HCT116 (cell line): ENCODE measurements at regions of chr1 and their contacts with region 1.

Region 1: DNA sequence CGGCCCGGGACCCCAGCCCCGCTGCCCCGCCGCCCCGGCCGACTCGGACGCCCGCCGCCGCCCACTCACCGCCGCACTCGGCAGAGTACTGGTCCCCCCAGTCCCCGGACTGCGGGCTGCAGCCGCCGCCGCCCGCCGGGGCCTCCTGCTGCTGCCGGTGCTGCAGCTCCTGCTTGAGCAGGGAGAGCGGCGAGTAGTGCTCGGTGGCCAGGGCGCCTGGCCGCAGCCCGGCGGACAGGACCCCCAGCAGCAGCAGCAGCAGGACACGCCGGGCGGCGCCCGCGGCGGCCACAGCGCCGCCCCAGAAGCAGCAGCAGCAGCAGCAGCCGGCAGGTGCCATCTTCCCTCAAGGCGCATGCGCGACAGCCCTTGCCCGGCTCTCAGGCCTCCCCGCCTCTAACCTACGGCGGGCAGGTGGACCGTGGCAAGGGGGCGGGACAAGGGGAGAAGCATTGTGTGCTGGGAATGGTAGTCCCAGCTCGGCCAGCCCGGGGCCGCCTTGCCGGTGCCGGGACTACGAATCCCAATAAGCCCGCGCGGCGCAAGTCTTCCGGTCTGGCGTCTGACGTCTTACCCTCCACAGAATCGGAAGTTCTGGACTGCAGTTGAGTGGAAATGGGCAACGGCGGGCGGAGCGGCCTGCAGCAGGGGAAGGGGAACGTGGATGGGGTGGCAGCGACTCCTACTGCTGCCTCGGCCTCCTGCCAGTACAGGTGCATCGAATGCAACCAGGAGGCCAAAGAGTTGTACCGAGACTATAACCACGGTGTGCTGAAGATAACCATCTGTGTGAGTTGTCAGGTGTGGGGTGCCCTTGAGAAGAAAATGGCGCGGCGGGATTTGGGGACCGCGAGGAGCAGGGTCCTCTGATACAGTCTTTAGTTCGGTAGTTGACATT is at the starts of genes ARV1 and TTC13:
- DNase-seq: peak; percentile 97
- ATAC-seq: peak; percentile 98
- H3K4me3 ChIP-seq: peak within 1 kb of the TSS; percentile 87 to 88
- H3K27ac ChIP-seq: peak within 1 kb of the TSS; percentile 61
- H3K4me1 ChIP-seq: peaks cover 7 to 13% of the 10 kb centered on the region in 2 experiments; a peak in 2 of 4 replicates
- H3K27me3 ChIP-seq: no peaks in the 10 kb centered on the region
- CTCF ChIP-seq: peak; percentile 55 to 65 (median 63); a peak in 5 of 6 replicates
- POLR2A ChIP-seq: no peak
- RAD21 ChIP-seq: peak; percentile 80
- total RNA-seq, gene ARV1: 4.0 TPM
- total RNA-seq, gene TTC13: 12.3 TPM

Region 2: DNA sequence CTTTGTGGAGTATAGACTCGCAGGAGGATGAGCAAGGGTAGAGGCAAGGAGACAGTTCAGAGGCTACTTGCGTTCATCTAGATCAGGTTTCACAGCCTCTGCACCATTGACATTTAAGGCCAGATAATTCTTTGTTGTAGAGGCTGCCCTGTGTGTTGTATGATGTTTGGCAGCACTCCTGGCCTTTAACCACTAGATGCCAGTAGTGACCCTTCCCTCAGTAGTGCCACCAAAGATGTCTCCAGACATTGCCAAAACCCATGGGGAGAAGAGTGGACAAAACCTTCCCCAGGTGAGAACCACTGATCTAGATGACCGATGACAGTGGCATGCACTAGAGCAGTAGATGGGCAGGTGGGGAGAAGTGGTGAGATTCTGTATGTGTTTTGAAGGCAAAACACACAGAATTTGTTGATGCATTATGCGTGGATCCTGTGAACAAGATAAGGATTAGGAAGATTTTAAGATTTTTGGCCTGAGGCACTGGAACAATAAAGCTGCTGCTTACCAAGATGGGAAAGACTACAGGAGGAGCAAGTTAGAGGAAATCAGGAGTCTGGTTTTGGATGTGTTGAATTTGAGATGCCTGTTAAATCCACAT is 346.4 kb before region 1 on chr1:
- CTCF ChIA-PET with region 1: no interaction called
- POLR2A ChIA-PET with region 1: no interaction called
- RAD21 ChIA-PET with region 1: no interaction called
- intact Hi-C with region 1: loop called (anchors 2 kb)
- DNase-seq: peak; percentile 52
- ATAC-seq: peak; percentile 95
- H3K4me3 ChIP-seq: no peak overlapping the region
- H3K27ac ChIP-seq: no peak overlapping the region
- H3K4me1 ChIP-seq: no peaks in the 10 kb centered on the region
- H3K27me3 ChIP-seq: peaks cover 4% of the 10 kb centered on the region; the same call in 1 of the 2 replicates
- CTCF ChIP-seq: peak; percentile 82 to 87 (median 83)
- POLR2A ChIP-seq: no peak
- RAD21 ChIP-seq: peak; percentile 92

Region 3: DNA sequence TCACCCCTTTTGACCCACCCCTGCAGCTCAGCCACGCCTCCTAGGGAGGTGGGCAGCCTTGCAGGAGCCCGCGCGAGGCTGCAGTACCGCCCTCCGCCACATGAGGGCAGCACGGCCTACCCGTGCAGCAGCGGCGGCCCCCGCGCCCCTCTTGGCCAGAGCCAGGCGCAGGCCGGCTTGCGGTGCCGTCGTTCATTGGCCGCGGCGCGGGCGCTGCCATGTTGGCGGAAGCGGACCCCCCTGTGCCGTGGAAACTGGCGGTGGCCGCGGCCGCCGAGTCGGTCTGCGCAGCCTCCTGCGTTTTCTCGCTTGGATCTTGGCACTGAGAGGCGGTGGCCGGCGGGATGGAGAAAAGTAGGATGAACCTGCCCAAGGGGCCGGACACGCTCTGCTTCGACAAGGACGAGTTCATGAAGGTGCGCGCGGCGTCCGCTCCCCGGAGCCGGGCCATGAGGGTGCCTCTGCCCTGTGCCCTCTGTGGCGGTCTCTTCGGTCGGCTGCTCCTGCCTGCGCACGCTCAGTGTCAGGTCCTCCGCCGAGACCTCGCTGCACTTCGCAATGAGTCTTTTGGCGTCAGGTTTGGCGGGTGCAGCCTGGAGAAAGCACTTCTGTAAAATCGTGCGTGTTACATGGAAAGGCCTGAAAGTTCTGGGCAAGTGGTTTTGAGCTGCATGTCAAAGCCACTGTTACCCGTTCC is 336.3 kb before region 1 on chr1 and contains the start of gene COG2:
- CTCF ChIA-PET with region 1: no interaction called
- POLR2A ChIA-PET with region 1: no interaction called
- RAD21 ChIA-PET with region 1: no interaction called
- intact Hi-C with region 1: loop called (anchors 2 kb)
- DNase-seq: peak; percentile 85
- ATAC-seq: peak; percentile 95
- H3K4me3 ChIP-seq: peak within 1 kb of the TSS; percentile 96 to 98
- H3K27ac ChIP-seq: peak within 1 kb of the TSS; percentile 47
- H3K4me1 ChIP-seq: peaks cover 11 to 22% of the 10 kb centered on the region in 2 experiments; a peak in 3 of 4 replicates
- H3K27me3 ChIP-seq: peaks cover 16% of the 10 kb centered on the region; the same call in 1 of the 2 replicates
- CTCF ChIP-seq: peak; percentile 84 to 98 (median 95)
- POLR2A ChIP-seq: no peak
- RAD21 ChIP-seq: peak; percentile 62
- total RNA-seq, gene COG2: 28.6 TPM

Region 4: GRCh38 chr1:230797942-230798418 is 180.8 kb before region 1 on chr1:
- CTCF ChIA-PET with region 1: interaction called, 7 read pairs
- POLR2A ChIA-PET with region 1: no interaction called
- RAD21 ChIA-PET with region 1: no interaction called
- intact Hi-C with region 1: loop called (anchors 1 kb)
- DNase-seq: peak; percentile 41
- ATAC-seq: peak; percentile 89
- H3K4me3 ChIP-seq: no peak overlapping the region
- H3K27ac ChIP-seq: no peak overlapping the region
- H3K4me1 ChIP-seq: no peaks in the 10 kb centered on the region
- H3K27me3 ChIP-seq: no peaks in the 10 kb centered on the region
- CTCF ChIP-seq: peak; percentile 59 to 93 (median 67)
- POLR2A ChIP-seq: no peak
- RAD21 ChIP-seq: peak; percentile 93

Region 5: DNA sequence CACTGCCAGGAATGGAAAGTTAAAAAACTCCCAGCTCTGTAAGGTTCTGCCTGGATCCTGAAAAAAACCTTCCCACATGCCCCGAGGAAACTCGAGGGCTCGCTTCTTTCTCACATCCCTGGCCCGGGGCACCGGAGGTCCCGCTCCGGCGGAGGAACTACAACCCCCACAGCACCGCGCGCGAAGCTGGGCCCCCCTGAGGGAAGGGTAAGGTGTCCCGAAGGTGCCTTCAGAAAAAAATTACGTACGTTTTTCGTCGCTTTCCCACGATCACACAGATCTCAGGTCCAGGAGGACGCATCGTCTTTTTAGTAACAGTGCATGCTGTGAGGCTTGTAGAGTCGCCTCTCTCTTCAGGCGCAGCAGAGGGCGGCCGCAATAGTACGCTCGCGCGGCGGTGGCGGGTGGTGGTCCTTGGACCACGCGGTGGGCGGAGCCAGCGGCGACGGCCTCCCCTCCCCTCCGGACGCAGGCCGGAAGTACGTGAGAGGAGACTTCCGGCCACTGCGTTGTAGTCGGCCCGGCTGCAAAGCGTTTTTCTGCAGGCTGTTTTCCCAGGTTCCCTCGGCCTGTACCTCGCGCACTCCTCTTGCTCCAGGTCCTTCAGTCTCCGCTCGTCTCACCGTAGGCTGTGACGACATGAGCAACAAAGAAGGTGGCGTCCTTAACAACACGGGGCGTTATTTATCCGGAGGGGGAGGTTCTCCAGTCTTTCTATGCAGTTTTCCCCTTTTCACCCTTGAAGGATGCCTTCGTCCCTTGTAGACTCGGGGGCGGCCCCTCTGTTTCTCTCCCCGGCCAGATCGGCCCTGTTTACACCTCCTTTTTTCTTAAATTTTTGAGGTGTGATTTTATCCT is 549.7 kb after region 1 on chr1 and contains the start of gene TSNAX:
- CTCF ChIA-PET with region 1: no interaction called
- POLR2A ChIA-PET with region 1: no interaction called
- RAD21 ChIA-PET with region 1: no interaction called
- intact Hi-C with region 1: loop called (anchors 5 kb)
- DNase-seq: peak; percentile 88
- ATAC-seq: peak; percentile 95
- H3K4me3 ChIP-seq: peak within 1 kb of the TSS; percentile 95 to 100
- H3K27ac ChIP-seq: peak within 1 kb of the TSS; percentile 78
- H3K4me1 ChIP-seq: peaks cover 7 to 22% of the 10 kb centered on the region in 2 experiments; a peak in 3 of 4 replicates
- H3K27me3 ChIP-seq: no peaks in the 10 kb centered on the region
- CTCF ChIP-seq: no peak
- POLR2A ChIP-seq: peak; percentile 84
- RAD21 ChIP-seq: no peak
- total RNA-seq, gene TSNAX: 47.1 TPM